Dorsolateral prefrontal cortex (tissue), 120 donors: ENCODE measurements at regions of chr1 and their contacts with region 1.

Region 1: GRCh38 chr1:42747125-42747524 is 7.1 kb upstream of the CLDN19 start:
- DNase-seq: peak in 7 of 10 donors; percentile 32 to 68 (median 52)
- H3K4me3 ChIP-seq: no peak overlapping the region
- H3K27ac ChIP-seq: no peak overlapping the region
- H3K27me3 ChIP-seq: no peaks in the 10 kb centered on the region
- CTCF ChIP-seq: peak in 55 of 56 donors; percentile 20 to 76 (median 61)

Region 2: GRCh38 chr1:42146626-42147320 is 600.4 kb before region 1 on chr1:
- intact Hi-C with region 1: loop called in 1 of 2 experiments (anchors 2 kb)
- DNase-seq: peak in 9 of 10 donors; percentile 52 to 81 (median 65)
- H3K4me3 ChIP-seq: peak overlapping the region in 12 of 59 donors; percentile 10 to 36 (median 28)
- H3K27ac ChIP-seq: no peak overlapping the region
- H3K27me3 ChIP-seq: peaks cover 0 to 46% (median 0%) of the 10 kb centered on the region in 45 donors
- CTCF ChIP-seq: peak; percentile 37 to 77 (median 68)

Region 3: DNA sequence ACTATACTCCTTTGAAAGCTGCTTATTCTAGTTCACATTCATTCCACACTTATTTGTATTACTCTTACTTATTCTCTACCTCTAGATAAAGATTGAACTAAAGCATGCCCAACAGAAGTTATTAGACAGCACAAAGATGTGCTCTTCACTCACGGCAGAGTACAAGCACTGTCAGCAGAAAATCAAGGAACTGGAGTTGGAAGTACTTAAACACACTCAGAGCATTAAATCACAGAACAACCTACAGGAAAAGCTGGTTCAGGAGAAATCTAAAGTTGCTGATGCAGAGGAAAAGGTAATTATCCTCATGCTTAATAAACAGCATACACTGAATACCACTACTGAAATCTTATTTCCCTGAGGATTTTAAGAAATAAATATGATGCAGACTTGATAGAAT is 170.2 kb before region 1 on chr1:
- intact Hi-C with region 1: loop called (anchors 5 to 10 kb)
- DNase-seq: no peak
- H3K4me3 ChIP-seq: no peak overlapping the region
- H3K27ac ChIP-seq: no peak overlapping the region
- H3K27me3 ChIP-seq: no peaks in the 10 kb centered on the region
- CTCF ChIP-seq: no peak

Region 4: GRCh38 chr1:42784946-42785693 is 38.0 kb after region 1 on chr1 and contains the start of gene TMEM269:
- intact Hi-C with region 1: no loop called
- DNase-seq: peak in 8 of 10 donors; percentile 19 to 67 (median 48)
- H3K4me3 ChIP-seq: peak within 1 kb of the TSS; percentile 29 to 72 (median 53)
- H3K27ac ChIP-seq: peak within 1 kb of the TSS in 3 of 59 donors; percentile 8 to 39 (median 38)
- H3K27me3 ChIP-seq: no peaks in the 10 kb centered on the region
- CTCF ChIP-seq: no peak
- total RNA-seq, gene TMEM269: 0.14 to 2.3 (median 0.55) TPM in 101 of 120 experiments, not detected in the others